ENCODE measurements at regions of chr4 and their contacts with region 1.

Region 1: GRCh38 chr4:70839589-70840093 is at the start of gene GRSF1:
- DNase-seq: peak; percentile 96
- ATAC-seq: peak; percentile 97 to 98
- total RNA-seq, gene GRSF1: 64.4 to 79.7 TPM

Region 2: GRCh38 chr4:70687821-70688794 is 151.5 kb before region 1 on chr4 and contains the start of gene UTP3:
- intact Hi-C with region 1: loop called in 1 of 2 experiments (anchors 5 kb)
- DNase-seq: peak; percentile 96
- ATAC-seq: peak; percentile 97 to 98
- total RNA-seq, gene UTP3: 17.6 to 24.0 TPM

Region 3: GRCh38 chr4:70778888-70779422 is 60.7 kb before region 1 on chr4:
- intact Hi-C with region 1: no loop called
- DNase-seq: no peak
- ATAC-seq: peak; percentile 41 to 73

Region 4: GRCh38 chr4:70901984-70902576 is 62.4 kb after region 1 on chr4 and contains the start of gene MOB1B:
- intact Hi-C with region 1: loop called in 1 of 2 experiments (anchors 2 kb)
- DNase-seq: peak; percentile 92
- ATAC-seq: peak; percentile 95 to 98
- total RNA-seq, gene MOB1B: 16.0 to 20.3 TPM

Region 5: DNA sequence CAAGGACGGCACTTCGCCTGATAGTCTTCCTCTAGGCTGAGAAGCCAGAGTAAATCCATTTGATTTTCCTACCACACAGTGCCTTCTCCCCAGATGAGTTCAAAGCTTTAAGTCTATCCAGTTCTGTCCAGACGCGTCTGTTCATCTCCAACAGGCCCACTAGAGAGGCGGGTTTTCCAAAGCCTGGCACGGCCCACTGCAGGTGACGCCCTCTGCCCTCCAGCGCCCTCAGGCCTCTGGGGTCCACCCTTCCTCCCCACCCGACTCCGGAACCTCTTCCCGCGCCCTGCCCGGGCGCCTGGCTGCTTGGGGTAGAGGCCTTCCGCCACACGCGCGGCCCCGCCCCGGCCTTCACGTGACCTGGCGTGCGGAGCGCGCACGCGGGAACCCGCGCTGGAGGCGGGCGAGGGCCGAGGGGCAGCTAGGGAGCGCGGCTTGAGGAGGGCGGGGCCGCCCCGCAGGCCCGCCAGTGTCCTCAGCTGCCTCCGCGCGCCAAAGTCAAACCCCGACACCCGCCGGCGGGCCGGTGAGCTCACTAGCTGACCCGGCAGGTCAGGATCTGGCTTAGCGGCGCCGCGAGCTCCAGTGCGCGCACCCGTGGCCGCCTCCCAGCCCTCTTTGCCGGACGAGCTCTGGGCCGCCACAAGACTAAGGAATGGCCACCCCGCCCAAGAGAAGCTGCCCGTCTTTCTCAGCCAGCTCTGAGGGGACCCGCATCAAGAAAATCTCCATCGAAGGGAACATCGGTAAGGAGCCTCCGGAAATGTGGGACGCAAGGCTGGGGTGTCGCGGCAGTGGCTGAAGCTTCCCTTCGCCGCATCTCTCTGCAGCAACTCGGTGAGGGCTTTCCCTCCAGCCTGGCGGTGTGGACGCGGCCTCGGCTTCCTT is 153.8 kb after region 1 on chr4 and contains the start of gene DCK:
- intact Hi-C with region 1: loop called in 1 of 2 experiments (anchors 10 kb)
- DNase-seq: peak; percentile 94
- ATAC-seq: peak; percentile 99
- total RNA-seq, gene DCK: 7.3 to 8.1 TPM

Measured in left cardiac atrium (tissue), 4 donors.